GM12878 (cell line): ENCODE measurements at regions of chr13 and their contacts with region 1.

Region 1: GRCh38 chr13:30132623-30133553 is 174.5 kb downstream of the KATNAL1 start:
- DNase-seq: no peak
- ATAC-seq: peak; percentile 99
- H3K4me3 ChIP-seq: no peak overlapping the region
- H3K27ac ChIP-seq: no peak overlapping the region
- H3K4me1 ChIP-seq: no peaks in the 10 kb centered on the region
- H3K27me3 ChIP-seq: no peaks in the 10 kb centered on the region
- CTCF ChIP-seq: peak; percentile 89 to 95 (median 94)
- EP300 ChIP-seq: 0 out of 4 replicates have a peak, but pooled peaks of 1 of the 2 experiments have one; percentile 10
- POLR2A ChIP-seq: no peak
- RAD21 ChIP-seq: peak; percentile 97

Region 2: GRCh38 chr13:30153545-30154441 is 20.9 kb after region 1 on chr13:
- CTCF ChIA-PET with region 1: interaction called, 93 read pairs
- POLR2A ChIA-PET with region 1: interaction called, 3 read pairs
- RAD21 ChIA-PET with region 1: interaction called, 82 read pairs
- SMC1A ChIA-PET with region 1: interaction called, 64 read pairs
- in situ Hi-C with region 1: no loop called
- intact Hi-C with region 1: loop called (anchors 1 kb)
- DNase-seq: no peak
- ATAC-seq: no peak
- H3K4me3 ChIP-seq: no peak overlapping the region
- H3K27ac ChIP-seq: no peak overlapping the region
- H3K4me1 ChIP-seq: peaks cover 22% of the 10 kb centered on the region
- H3K27me3 ChIP-seq: no peaks in the 10 kb centered on the region
- CTCF ChIP-seq: no peak
- EP300 ChIP-seq: no peak
- POLR2A ChIP-seq: no peak
- RAD21 ChIP-seq: no peak

Region 3: GRCh38 chr13:30196025-30196424 is 63.1 kb after region 1 on chr13:
- CTCF ChIA-PET with region 1: interaction called, 11 read pairs
- POLR2A ChIA-PET with region 1: interaction called, 3 read pairs
- RAD21 ChIA-PET with region 1: interaction called, 19 read pairs
- SMC1A ChIA-PET with region 1: interaction called, 17 read pairs
- in situ Hi-C with region 1: no loop called
- intact Hi-C with region 1: no loop called
- DNase-seq: no peak
- ATAC-seq: no peak
- H3K4me3 ChIP-seq: no peak overlapping the region
- H3K27ac ChIP-seq: no peak overlapping the region
- H3K4me1 ChIP-seq: peaks cover 34% of the 10 kb centered on the region
- H3K27me3 ChIP-seq: no peaks in the 10 kb centered on the region
- CTCF ChIP-seq: no peak
- EP300 ChIP-seq: no peak
- POLR2A ChIP-seq: no peak
- RAD21 ChIP-seq: no peak

Region 4: GRCh38 chr13:30306762-30307193 is 173.9 kb after region 1 on chr13:
- CTCF ChIA-PET with region 1: interaction called, 23 read pairs
- POLR2A ChIA-PET with region 1: no interaction called
- RAD21 ChIA-PET with region 1: interaction called, 16 read pairs
- SMC1A ChIA-PET with region 1: interaction called, 15 read pairs
- in situ Hi-C with region 1: no loop called
- intact Hi-C with region 1: no loop called
- DNase-seq: peak; percentile 66
- ATAC-seq: peak; percentile 89
- H3K4me3 ChIP-seq: peak overlapping the region; percentile 67
- H3K27ac ChIP-seq: peak overlapping the region; percentile 74
- H3K4me1 ChIP-seq: peaks cover 18% of the 10 kb centered on the region
- H3K27me3 ChIP-seq: no peaks in the 10 kb centered on the region
- CTCF ChIP-seq: no peak
- EP300 ChIP-seq: no peak
- POLR2A ChIP-seq: peak; percentile 71
- RAD21 ChIP-seq: no peak

Region 5: GRCh38 chr13:30371649-30372265 is 238.9 kb after region 1 on chr13:
- CTCF ChIA-PET with region 1: interaction called, 25 read pairs
- POLR2A ChIA-PET with region 1: no interaction called
- RAD21 ChIA-PET with region 1: interaction called, 10 read pairs
- SMC1A ChIA-PET with region 1: interaction called, 4 read pairs
- in situ Hi-C with region 1: no loop called
- intact Hi-C with region 1: no loop called
- DNase-seq: peak; percentile 96
- ATAC-seq: peak; percentile 74
- H3K4me3 ChIP-seq: peak overlapping the region; percentile 12; the same call in 1 of the 2 replicates
- H3K27ac ChIP-seq: peak overlapping the region; percentile 73
- H3K4me1 ChIP-seq: peaks cover 62% of the 10 kb centered on the region
- H3K27me3 ChIP-seq: no peaks in the 10 kb centered on the region
- CTCF ChIP-seq: peak in 1 of 3 experiments; percentile 6; a peak in 1 of 6 replicates
- EP300 ChIP-seq: peak; percentile 96 to 97
- POLR2A ChIP-seq: no peak
- RAD21 ChIP-seq: 0 out of 2 replicates have a peak, but pooled peaks have one; percentile 1

Region 6: GRCh38 chr13:30802953-30803478 is 670.1 kb after region 1 on chr13:
- CTCF ChIA-PET with region 1: interaction called, 3 read pairs
- POLR2A ChIA-PET with region 1: no interaction called
- RAD21 ChIA-PET with region 1: interaction called, 5 read pairs
- SMC1A ChIA-PET with region 1: interaction called, 3 read pairs
- in situ Hi-C with region 1: no loop called
- intact Hi-C with region 1: loop called (anchors 5 kb)
- DNase-seq: peak; percentile 32
- ATAC-seq: peak; percentile 100
- H3K4me3 ChIP-seq: no peak overlapping the region
- H3K27ac ChIP-seq: no peak overlapping the region
- H3K4me1 ChIP-seq: no peaks in the 10 kb centered on the region
- H3K27me3 ChIP-seq: no peaks in the 10 kb centered on the region; a peak in 1 of 4 replicates
- CTCF ChIP-seq: peak; percentile 88 to 95 (median 92)
- EP300 ChIP-seq: no peak
- POLR2A ChIP-seq: no peak
- RAD21 ChIP-seq: peak; percentile 95